ENCODE measurements at regions of chr2 and their contacts with region 1.

Region 1: GRCh38 chr2:38750891-38751595 is at the start of gene SRSF7:
- DNase-seq: peak; percentile 96
- CTCF ChIP-seq: no peak

Region 2: DNA sequence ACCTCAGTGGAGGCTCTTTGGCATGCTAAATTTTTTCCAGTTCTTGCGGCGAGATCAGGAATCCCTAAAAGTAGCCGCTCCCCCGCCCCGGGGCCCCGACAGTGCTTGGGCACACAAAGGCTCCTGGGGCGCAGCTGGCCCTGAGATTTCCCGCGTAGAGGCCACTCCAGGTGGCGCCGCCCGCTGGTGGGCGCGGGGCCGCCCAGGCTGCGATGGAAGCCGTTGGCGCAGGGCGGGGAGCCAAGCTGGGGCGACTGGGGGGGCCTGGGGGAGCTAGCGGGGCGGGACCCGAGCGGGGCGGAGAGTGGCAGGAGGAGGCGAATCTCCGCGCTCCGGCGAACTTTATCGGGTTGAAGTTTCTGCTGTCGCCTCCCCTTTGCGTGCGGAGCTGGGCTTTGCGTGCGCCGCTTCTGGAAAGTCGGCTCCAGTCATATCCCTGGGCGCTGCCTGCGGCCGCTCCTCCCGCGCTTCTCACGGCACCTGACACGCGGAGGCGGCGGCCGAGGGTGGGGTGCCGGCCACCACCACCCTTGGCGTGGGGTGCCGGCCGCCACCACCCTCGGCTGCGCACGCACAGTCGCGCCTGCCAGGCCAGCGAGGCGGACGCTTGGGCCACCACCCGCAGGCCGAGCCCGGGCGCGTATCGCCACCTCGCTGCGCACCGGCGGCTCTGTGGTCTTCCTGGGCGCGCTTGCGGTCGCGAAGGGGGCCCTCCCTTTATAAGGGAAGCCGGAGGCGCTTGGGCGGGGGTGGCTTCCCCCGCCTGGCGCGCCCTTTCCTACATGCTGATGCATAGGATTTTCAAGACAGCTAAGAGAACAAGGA is 674.2 kb before region 1 on chr2:
- CTCF ChIA-PET with region 1: no interaction called
- POLR2A ChIA-PET with region 1: interaction called, 13 read pairs
- DNase-seq: peak; percentile 87
- CTCF ChIP-seq: peak; percentile 54

Region 3: DNA sequence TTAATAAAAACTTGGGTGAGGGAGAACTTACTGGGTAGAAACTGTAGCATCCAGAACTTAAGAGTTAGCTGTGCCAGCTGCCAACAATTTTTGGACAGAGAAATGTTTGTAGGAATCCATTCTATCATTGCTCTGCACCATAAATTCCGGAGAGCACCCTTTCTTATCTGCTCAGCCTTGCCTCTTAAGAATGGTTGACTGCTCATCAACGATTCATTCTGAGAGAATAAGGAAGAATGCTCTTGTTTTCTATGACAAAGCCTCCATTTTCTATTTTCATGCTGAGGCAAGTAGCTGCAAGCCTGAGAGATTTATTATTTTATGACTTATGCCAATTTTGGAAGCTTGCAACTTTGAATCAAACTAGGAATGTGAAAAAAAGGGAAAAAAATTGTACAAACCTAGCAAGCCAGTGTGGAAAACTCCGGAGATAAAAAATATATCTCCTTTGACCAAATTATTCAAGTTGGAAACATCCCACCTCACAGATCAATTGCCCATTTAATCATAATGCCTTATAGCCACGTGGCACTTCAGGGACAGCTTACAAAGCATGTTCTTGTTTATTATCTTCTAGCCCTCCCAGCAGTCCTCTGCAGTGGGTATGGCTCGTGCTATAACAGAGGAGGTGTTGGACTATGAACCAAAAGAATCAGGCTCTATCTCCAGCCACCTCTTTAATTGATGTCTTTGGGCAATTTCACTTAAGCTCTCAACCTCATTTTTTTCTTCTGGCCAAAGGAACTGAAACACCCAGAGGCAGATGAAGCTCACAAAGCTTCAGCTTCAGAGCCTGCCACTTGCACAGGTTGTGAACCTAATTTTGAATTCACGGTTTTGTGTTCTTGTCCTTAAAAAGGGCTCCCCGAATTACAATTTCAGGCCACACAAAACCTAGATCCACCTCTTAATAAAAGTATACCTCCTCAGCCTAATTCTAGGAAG is 333.0 kb before region 1 on chr2:
- CTCF ChIA-PET with region 1: no interaction called
- POLR2A ChIA-PET with region 1: no interaction called
- DNase-seq: no peak
- CTCF ChIP-seq: no peak

Region 4: DNA sequence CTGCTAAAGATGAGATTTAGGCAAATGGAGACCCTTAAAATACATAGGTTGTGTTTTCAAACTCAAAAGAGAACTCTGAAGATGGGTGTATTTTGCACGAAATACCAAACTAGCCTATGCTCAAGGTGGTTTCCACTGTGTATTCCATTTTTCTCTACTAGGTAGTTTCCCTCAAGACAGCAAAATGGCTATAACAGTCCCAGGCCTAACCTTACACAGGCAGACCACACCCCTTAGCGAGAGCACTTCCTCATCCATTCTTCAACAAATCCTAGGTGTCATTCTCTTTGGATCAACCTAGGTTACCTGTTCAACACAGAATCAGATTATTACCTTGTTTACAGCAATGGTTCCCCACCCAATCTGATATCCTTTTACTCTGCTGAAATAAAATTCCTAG is 191.0 kb before region 1 on chr2:
- CTCF ChIA-PET with region 1: interaction called, 3 read pairs
- POLR2A ChIA-PET with region 1: interaction called, 12 read pairs
- DNase-seq: no peak
- CTCF ChIP-seq: no peak

Region 5: GRCh38 chr2:38610851-38611801 is 139.9 kb before region 1 on chr2:
- CTCF ChIA-PET with region 1: no interaction called
- POLR2A ChIA-PET with region 1: interaction called, 13 read pairs
- DNase-seq: peak; percentile 53
- CTCF ChIP-seq: no peak

Region 6: GRCh38 chr2:38734299-38735058 is 16.6 kb before region 1 on chr2:
- CTCF ChIA-PET with region 1: interaction called, 3 read pairs
- POLR2A ChIA-PET with region 1: interaction called, 50 read pairs
- DNase-seq: no peak
- CTCF ChIP-seq: no peak

Region 7: DNA sequence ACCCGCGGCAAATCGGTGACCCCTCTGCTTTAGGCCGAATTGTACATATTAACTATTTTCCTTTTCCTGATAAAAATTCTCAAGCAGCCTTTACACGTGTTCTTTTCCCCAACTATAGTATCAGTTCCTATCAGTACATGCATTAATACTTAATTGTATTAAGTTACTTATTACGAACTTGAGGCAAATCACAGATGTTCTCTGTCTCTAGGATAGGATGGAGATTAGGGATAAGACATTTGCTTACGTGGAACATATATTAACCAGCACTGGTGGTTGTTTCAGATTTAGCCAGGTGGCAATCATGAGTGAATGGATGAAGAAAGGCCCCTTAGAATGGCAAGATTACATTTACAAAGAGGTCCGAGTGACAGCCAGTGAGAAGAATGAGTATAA is 27.6 kb after region 1 on chr2:
- CTCF ChIA-PET with region 1: no interaction called
- POLR2A ChIA-PET with region 1: interaction called, 17 read pairs
- DNase-seq: no peak
- CTCF ChIP-seq: no peak

Measured in GM10248 (cell line).